ENCODE measurements at regions of chr6 and their contacts with region 1.

Region 1: GRCh38 chr6:111087106-111087835 is at the start of gene SLC16A10:
- DNase-seq: peak; percentile 61 to 91 (median 82)
- ATAC-seq: peak; percentile 85 to 93 (median 90)
- H3K4me3 ChIP-seq: peak within 1 kb of the TSS; percentile 54 to 94
- H3K4me3 Mint-ChIP-seq: peak within 1 kb of the TSS; percentile 86 to 96 (median 89)
- H3K27ac ChIP-seq: peak within 1 kb of the TSS; percentile 32
- H3K27ac Mint-ChIP-seq: peak within 1 kb of the TSS; percentile 80 to 94
- H3K4me1 ChIP-seq: peaks cover 8 to 11% of the 10 kb centered on the region in 2 experiments
- H3K4me1 Mint-ChIP-seq: peaks cover 36 to 39% (median 39%) of the 10 kb centered on the region in 3 donors
- H3K27me3 ChIP-seq: peaks cover 0 to 3% of the 10 kb centered on the region in 2 experiments
- H3K27me3 Mint-ChIP-seq: peaks cover 0 to 11% of the 10 kb centered on the region in 2 donors
- total RNA-seq, gene SLC16A10: 10.2 to 16.5 (median 14.3) TPM

Region 2: GRCh38 chr6:111122458-111123286 is 35.4 kb after region 1 on chr6:
- CTCF ChIA-PET with region 1: no interaction called
- POLR2A ChIA-PET with region 1: interaction called in 1 of 2 experiments, 10 read pairs
- DNase-seq: peak in 1 of 35 experiments; percentile 19
- ATAC-seq: peak; percentile 45 to 78 (median 66)
- H3K4me3 ChIP-seq: no peak overlapping the region
- H3K4me3 Mint-ChIP-seq: peak overlapping the region in 1 of 3 donors; percentile 22
- H3K27ac ChIP-seq: peak overlapping the region; percentile 32
- H3K27ac Mint-ChIP-seq: peak overlapping the region; percentile 73 to 87
- H3K4me1 ChIP-seq: peaks cover 4 to 12% of the 10 kb centered on the region in 2 experiments
- H3K4me1 Mint-ChIP-seq: peaks cover 16 to 23% (median 21%) of the 10 kb centered on the region in 3 donors
- H3K27me3 ChIP-seq: no peaks in the 10 kb centered on the region
- H3K27me3 Mint-ChIP-seq: no peaks in the 10 kb centered on the region